Endothelial cell of umbilical vein (primary cell): ENCODE measurements at regions of chr6 and their contacts with region 1.

Region 1: DNA sequence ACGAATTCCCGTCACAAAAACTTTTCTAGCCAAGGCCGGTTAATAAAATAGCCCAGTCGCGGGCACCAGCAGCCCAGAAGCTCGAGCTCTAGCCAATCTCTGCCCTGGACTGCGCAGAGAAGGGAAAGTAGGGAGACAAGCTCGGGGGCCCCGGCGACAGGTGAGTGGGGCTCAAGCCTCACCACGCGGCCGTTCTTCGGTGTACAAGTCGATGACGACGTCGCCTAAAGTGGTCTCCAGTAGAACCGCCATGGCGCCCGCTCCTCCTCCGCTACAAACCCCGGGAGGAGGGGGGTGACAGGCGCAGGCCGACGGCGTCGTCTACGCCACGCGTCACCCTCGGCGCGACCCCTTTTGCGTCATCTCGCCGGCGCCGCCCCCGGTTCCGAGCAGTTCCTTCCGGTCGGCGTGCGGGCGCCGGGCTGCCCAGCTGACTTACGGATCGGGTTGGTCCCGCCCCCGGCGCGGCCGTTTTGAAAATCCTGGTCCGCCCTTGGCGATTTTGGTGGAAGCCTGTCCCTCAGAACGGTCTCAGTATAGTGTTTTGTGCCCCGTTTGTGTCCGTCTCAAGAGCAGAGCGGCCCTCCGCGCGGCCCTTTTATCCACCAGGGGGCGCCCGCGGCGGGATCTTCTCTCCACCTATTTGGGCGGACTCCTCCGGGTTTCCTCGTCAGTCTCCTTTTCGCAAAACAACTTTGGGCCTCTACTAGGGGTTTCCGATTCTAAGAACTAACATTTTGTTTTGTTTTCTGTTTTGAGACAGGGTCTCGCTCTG is at the start of gene PPIL4:
- DNase-seq: peak; percentile 96
- H3K4me3 ChIP-seq: peak within 1 kb of the TSS; percentile 59 to 85 (median 62)
- H3K27ac ChIP-seq: peak within 1 kb of the TSS; percentile 92
- H3K4me1 ChIP-seq: peaks cover 8% of the 10 kb centered on the region
- H3K27me3 ChIP-seq: peaks cover 2 to 7% of the 10 kb centered on the region in 2 experiments
- CTCF ChIP-seq: peak; percentile 82
- POLR2A ChIP-seq: peak; percentile 82
- total RNA-seq, gene PPIL4: 24.3 and 27.8 TPM in 2 replicates

Region 2: DNA sequence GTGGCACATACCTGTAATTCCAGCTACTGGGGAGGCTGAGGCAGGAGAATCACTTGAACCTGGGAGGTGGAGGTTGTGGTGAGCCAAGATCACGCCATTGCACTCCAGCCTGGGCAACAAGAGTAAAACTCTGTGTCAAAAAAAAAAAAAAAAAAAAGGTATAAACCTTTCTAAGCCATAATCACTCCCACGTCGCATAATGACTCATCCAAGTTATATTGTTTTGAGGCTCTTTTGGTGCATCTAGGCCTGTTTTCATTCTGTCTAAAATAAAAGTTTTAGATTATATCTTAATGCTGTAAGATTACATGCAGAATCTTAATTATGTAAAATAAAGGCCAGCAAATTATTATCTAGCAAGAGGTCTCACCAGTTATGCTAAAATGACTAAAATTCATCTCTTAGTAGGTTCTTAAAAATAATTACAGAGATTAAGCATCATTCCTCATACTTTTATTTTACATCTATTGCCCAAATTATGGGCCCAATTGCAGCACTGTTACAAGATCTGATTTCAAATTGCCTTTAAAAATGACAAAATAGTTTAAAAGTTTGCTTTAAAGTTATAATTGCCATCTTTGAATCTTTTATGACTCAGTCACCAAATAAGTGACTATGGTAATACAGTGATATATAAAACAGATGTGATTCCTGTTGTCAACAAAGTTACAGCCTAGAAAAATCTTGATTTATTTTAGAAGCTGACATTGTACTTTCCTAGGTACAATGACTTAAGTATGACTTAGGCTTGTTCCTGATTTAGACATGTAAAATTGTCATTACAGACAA is 156.2 kb before region 1 on chr6:
- CTCF ChIA-PET with region 1: no interaction called
- POLR2A ChIA-PET with region 1: no interaction called
- dilution Hi-C with region 1: no loop called
- intact Hi-C with region 1: no loop called
- DNase-seq: no peak
- H3K4me3 ChIP-seq: no peak overlapping the region
- H3K27ac ChIP-seq: no peak overlapping the region
- H3K4me1 ChIP-seq: peaks cover 3% of the 10 kb centered on the region
- H3K27me3 ChIP-seq: no peaks in the 10 kb centered on the region
- CTCF ChIP-seq: no peak
- POLR2A ChIP-seq: no peak

Region 3: GRCh38 chr6:149560736-149561135 is 14.8 kb after region 1 on chr6:
- CTCF ChIA-PET with region 1: interaction called, 35 read pairs
- POLR2A ChIA-PET with region 1: interaction called, 3 read pairs
- dilution Hi-C with region 1: no loop called
- intact Hi-C with region 1: no loop called
- DNase-seq: peak; percentile 21
- H3K4me3 ChIP-seq: no peak overlapping the region
- H3K27ac ChIP-seq: no peak overlapping the region
- H3K4me1 ChIP-seq: peaks cover 12% of the 10 kb centered on the region
- H3K27me3 ChIP-seq: peaks cover 5 to 11% of the 10 kb centered on the region in 2 experiments
- CTCF ChIP-seq: peak; percentile 47 to 49
- POLR2A ChIP-seq: no peak

Region 4: GRCh38 chr6:149648148-149649145 is 102.5 kb after region 1 on chr6 and contains the start of gene KATNA1:
- CTCF ChIA-PET with region 1: no interaction called
- POLR2A ChIA-PET with region 1: no interaction called
- dilution Hi-C with region 1: no loop called
- intact Hi-C with region 1: loop called (anchors 1 kb)
- DNase-seq: peak; percentile 85
- H3K4me3 ChIP-seq: peak within 1 kb of the TSS; percentile 83 to 95 (median 94)
- H3K27ac ChIP-seq: peak within 1 kb of the TSS; percentile 35
- H3K4me1 ChIP-seq: peaks cover 3% of the 10 kb centered on the region
- H3K27me3 ChIP-seq: no peaks in the 10 kb centered on the region
- CTCF ChIP-seq: no peak
- POLR2A ChIP-seq: peak; percentile 79
- total RNA-seq, gene KATNA1: 15.9 and 16.2 TPM in 2 replicates

Region 5: GRCh38 chr6:149746147-149746946 is 200.4 kb after region 1 on chr6 and contains the start of gene NUP43:
- CTCF ChIA-PET with region 1: no interaction called
- POLR2A ChIA-PET with region 1: no interaction called
- dilution Hi-C with region 1: no loop called
- intact Hi-C with region 1: loop called (anchors 1 kb)
- DNase-seq: peak; percentile 92
- H3K4me3 ChIP-seq: peak within 1 kb of the TSS; percentile 83 to 97 (median 96)
- H3K27ac ChIP-seq: peak within 1 kb of the TSS; percentile 47
- H3K4me1 ChIP-seq: peaks cover 12% of the 10 kb centered on the region
- H3K27me3 ChIP-seq: no peaks in the 10 kb centered on the region
- CTCF ChIP-seq: peak; percentile 34 to 53
- POLR2A ChIP-seq: peak; percentile 82
- total RNA-seq, gene NUP43: 49.0 and 56.8 TPM in 2 replicates

Region 6: DNA sequence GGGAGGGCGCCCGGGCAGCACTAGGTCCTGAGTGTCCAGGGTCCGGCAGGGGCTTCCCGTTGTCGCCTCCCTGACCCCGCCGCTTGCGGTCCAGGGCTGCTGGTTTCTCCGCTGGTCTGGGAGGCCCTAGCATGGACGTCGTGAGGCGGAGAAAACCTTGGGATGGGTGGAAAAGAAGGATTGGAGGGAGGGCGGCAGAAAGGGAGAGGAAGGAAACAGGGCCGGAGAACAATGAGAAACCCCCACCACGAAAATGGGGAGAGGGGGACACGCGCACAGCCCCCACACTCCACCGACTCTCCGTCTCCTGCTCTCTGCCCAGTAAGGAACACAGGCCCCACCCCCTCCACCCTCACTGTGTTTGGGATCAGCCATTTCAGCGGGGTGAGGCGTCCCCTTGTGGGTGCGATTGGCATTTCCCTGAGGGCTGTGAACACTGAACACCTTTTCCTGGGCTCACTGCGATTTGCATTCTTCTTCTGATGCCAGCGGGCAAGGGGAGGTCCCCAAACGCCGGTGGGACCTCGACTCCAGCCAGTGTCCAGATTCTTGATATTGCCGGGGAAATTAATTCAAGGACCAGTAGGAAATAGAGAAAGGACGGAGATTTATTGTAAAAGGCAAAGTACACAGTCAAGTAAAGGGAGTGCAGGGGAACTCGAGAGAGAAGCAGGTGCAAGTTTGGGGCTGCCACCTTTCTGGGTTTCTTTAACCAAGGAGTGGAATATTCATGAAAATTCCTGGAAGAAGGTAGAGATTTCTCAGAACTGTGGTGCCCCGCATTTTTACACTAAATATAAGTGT is 380.2 kb after region 1 on chr6:
- CTCF ChIA-PET with region 1: interaction called, 4 read pairs
- POLR2A ChIA-PET with region 1: no interaction called
- dilution Hi-C with region 1: no loop called
- intact Hi-C with region 1: loop called (anchors 2 kb)
- DNase-seq: peak; percentile 80
- H3K4me3 ChIP-seq: peak overlapping the region; percentile 19 to 47 (median 45)
- H3K27ac ChIP-seq: no peak overlapping the region
- H3K4me1 ChIP-seq: peaks cover 4% of the 10 kb centered on the region
- H3K27me3 ChIP-seq: peaks cover 20 to 21% of the 10 kb centered on the region in 2 experiments
- CTCF ChIP-seq: peak; percentile 72 to 91
- POLR2A ChIP-seq: no peak